Activated B cell treated with CpG ODN at 0.5 μM for 24 hours (primary cell): ENCODE measurements at regions of chr3 and their contacts with region 1.

Region 1: GRCh38 chr3:194583604-194584318 is 49.5 kb downstream of the TMEM44 start:
- DNase-seq: peak; percentile 95
- ATAC-seq: peak; percentile 92
- H3K4me3 Mint-ChIP-seq: peak overlapping the region; percentile 94
- H3K27ac Mint-ChIP-seq: peak overlapping the region; percentile 97
- H3K4me1 Mint-ChIP-seq: peaks cover 16% of the 10 kb centered on the region
- H3K27me3 Mint-ChIP-seq: no peaks in the 10 kb centered on the region
- CTCF ChIP-seq: no peak

Region 2: DNA sequence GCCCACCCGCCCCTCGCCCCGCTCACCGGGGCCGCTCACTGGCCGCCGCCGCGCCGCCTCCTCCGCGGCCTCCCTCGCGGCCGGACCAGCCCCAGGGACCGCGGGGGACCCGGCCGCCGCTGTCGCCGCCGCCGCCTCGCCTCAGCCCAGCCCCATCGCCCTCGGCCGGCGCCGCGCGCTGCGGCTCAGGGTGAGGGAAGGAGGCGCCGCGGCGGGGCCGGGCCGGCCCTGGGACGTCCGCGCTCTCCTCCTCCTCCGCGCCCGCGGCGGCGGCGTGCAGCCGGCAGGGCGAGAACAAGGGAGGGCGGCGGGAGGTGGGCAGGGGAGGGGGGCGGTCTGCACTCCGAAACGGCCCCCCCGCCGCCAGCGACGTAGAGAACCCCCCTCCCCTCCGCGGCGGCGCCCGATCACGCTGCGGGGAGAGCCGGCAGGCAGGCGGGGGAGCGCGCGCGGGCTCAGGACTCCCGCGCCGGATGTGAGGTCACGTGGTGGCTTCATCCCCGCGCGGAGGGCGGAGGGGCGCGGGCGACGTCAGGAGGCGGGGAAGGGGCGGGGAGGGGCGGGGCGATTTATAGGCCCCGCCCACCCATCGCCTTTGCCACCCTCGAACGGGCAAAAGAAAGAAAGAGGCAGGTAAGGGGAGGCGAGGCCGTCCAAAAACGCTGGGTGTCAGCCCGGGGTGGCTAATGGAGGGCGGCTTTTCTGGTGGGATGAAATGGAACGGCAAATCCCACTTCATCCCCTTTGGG is 97.0 kb before region 1 on chr3 and contains the start of gene ATP13A3:
- CTCF ChIA-PET with region 1: no interaction called
- POLR2A ChIA-PET with region 1: interaction called, 8 read pairs
- intact Hi-C with region 1: loop called (anchors 1 kb)
- DNase-seq: peak; percentile 86
- ATAC-seq: peak; percentile 75
- H3K4me3 Mint-ChIP-seq: peak within 1 kb of the TSS; percentile 91
- H3K27ac Mint-ChIP-seq: peak within 1 kb of the TSS; percentile 88
- H3K4me1 Mint-ChIP-seq: peaks cover 63% of the 10 kb centered on the region
- H3K27me3 Mint-ChIP-seq: no peaks in the 10 kb centered on the region
- CTCF ChIP-seq: no peak
- total RNA-seq, gene ATP13A3: 79.8 and 91.9 TPM in 2 replicates